ENCODE measurements at regions of chr7 and their contacts with region 1.

Region 1: GRCh38 chr7:139777948-139778841 is at the start of gene HIPK2:
- DNase-seq: peak; percentile 69 to 80 (median 74)
- H3K4me3 ChIP-seq: peak within 1 kb of the TSS; percentile 73 to 92
- H3K4me3 Mint-ChIP-seq: peak within 1 kb of the TSS; percentile 96 to 100 (median 99)
- H3K27ac ChIP-seq: peak within 1 kb of the TSS; percentile 64
- H3K27ac Mint-ChIP-seq: peak within 1 kb of the TSS; percentile 97 to 99 (median 98)
- H3K4me1 ChIP-seq: peaks cover 40% of the 10 kb centered on the region
- H3K4me1 Mint-ChIP-seq: peaks cover 30 to 57% (median 40%) of the 10 kb centered on the region in 4 donors
- H3K27me3 ChIP-seq: no peaks in the 10 kb centered on the region
- H3K27me3 Mint-ChIP-seq: peaks cover 2 to 7% of the 10 kb centered on the region in 2 donors
- total RNA-seq, gene HIPK2: 31.2 to 34.1 TPM

Region 2: GRCh38 chr7:139738101-139738489 is 40.1 kb before region 1 on chr7:
- CTCF ChIA-PET with region 1: no interaction called
- POLR2A ChIA-PET with region 1: interaction called, 3 read pairs
- intact Hi-C with region 1: loop called (anchors 5 kb)
- DNase-seq: no peak
- H3K4me3 ChIP-seq: no peak overlapping the region
- H3K4me3 Mint-ChIP-seq: peak overlapping the region in 6 of 8 donors; percentile 23 to 75 (median 64)
- H3K27ac ChIP-seq: no peak overlapping the region
- H3K27ac Mint-ChIP-seq: peak overlapping the region; percentile 66 to 90 (median 87)
- H3K4me1 ChIP-seq: peaks cover 27% of the 10 kb centered on the region
- H3K4me1 Mint-ChIP-seq: peaks cover 42 to 73% (median 52%) of the 10 kb centered on the region in 4 donors
- H3K27me3 ChIP-seq: no peaks in the 10 kb centered on the region
- H3K27me3 Mint-ChIP-seq: no peaks in the 10 kb centered on the region

Region 3: DNA sequence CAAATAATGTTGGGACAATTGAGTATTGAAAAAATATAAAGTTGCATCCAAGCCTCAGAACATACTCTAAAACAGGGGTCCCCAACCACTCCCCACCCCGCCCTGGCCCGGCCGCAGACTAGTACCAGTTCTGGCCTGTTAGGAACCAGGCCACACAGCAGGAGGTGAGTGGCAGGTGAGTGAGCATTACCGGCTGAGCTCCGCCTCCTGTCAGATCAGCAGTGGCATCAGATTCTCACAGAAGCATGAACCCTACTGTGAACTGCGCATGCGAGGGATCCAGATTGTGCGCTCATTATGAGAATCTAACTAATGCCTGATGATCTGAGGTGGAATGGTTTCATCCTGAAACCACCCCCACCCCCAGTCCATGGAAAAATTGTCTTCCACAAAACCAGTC is 19.8 kb before region 1 on chr7:
- CTCF ChIA-PET with region 1: no interaction called
- POLR2A ChIA-PET with region 1: no interaction called
- intact Hi-C with region 1: no loop called
- DNase-seq: no peak
- H3K4me3 ChIP-seq: no peak overlapping the region
- H3K4me3 Mint-ChIP-seq: no peak overlapping the region
- H3K27ac ChIP-seq: no peak overlapping the region
- H3K27ac Mint-ChIP-seq: no peak overlapping the region
- H3K4me1 ChIP-seq: no peaks in the 10 kb centered on the region
- H3K4me1 Mint-ChIP-seq: peaks cover 39 to 66% (median 57%) of the 10 kb centered on the region in 4 donors
- H3K27me3 ChIP-seq: no peaks in the 10 kb centered on the region
- H3K27me3 Mint-ChIP-seq: no peaks in the 10 kb centered on the region

Region 4: GRCh38 chr7:139829025-139829774 is 51.0 kb after region 1 on chr7 and contains the start of gene TBXAS1:
- CTCF ChIA-PET with region 1: no interaction called
- POLR2A ChIA-PET with region 1: interaction called, 15 read pairs
- intact Hi-C with region 1: loop called (anchors 1 kb)
- DNase-seq: peak in 4 of 5 donors; percentile 18 to 35 (median 28)
- H3K4me3 ChIP-seq: peak within 1 kb of the TSS; percentile 7 to 18
- H3K4me3 Mint-ChIP-seq: peak within 1 kb of the TSS; percentile 83 to 90 (median 87)
- H3K27ac ChIP-seq: peak within 1 kb of the TSS; percentile 36
- H3K27ac Mint-ChIP-seq: peak within 1 kb of the TSS; percentile 84 to 97 (median 93)
- H3K4me1 ChIP-seq: peaks cover 28% of the 10 kb centered on the region
- H3K4me1 Mint-ChIP-seq: peaks cover 24 to 42% (median 31%) of the 10 kb centered on the region in 4 donors
- H3K27me3 ChIP-seq: no peaks in the 10 kb centered on the region
- H3K27me3 Mint-ChIP-seq: peaks cover 2 to 3% of the 10 kb centered on the region in 2 donors
- total RNA-seq, gene TBXAS1: 16.6 to 18.0 TPM

Region 5: GRCh38 chr7:139982927-139983920 is 205.0 kb after region 1 on chr7:
- CTCF ChIA-PET with region 1: no interaction called
- POLR2A ChIA-PET with region 1: no interaction called
- intact Hi-C with region 1: loop called (anchors 5 kb)
- DNase-seq: no peak
- H3K4me3 ChIP-seq: no peak overlapping the region
- H3K4me3 Mint-ChIP-seq: peak overlapping the region in 1 of 8 donors; percentile 58
- H3K27ac ChIP-seq: no peak overlapping the region
- H3K27ac Mint-ChIP-seq: peak overlapping the region in 1 of 7 donors; percentile 32
- H3K4me1 ChIP-seq: peaks cover 20% of the 10 kb centered on the region
- H3K4me1 Mint-ChIP-seq: peaks cover 9 to 21% (median 18%) of the 10 kb centered on the region in 4 donors
- H3K27me3 ChIP-seq: no peaks in the 10 kb centered on the region
- H3K27me3 Mint-ChIP-seq: no peaks in the 10 kb centered on the region

Region 6: GRCh38 chr7:140062528-140063299 is 284.5 kb after region 1 on chr7 and contains the start of gene PARP12:
- CTCF ChIA-PET with region 1: no interaction called
- POLR2A ChIA-PET with region 1: no interaction called
- intact Hi-C with region 1: loop called (anchors 1 kb)
- DNase-seq: peak; percentile 84 to 89 (median 86)
- H3K4me3 ChIP-seq: peak within 1 kb of the TSS; percentile 54 to 89
- H3K4me3 Mint-ChIP-seq: peak within 1 kb of the TSS; percentile 92 to 96 (median 95)
- H3K27ac ChIP-seq: peak within 1 kb of the TSS; percentile 84
- H3K27ac Mint-ChIP-seq: peak within 1 kb of the TSS; percentile 86 to 99 (median 91)
- H3K4me1 ChIP-seq: peaks cover 45% of the 10 kb centered on the region
- H3K4me1 Mint-ChIP-seq: peaks cover 31 to 56% (median 43%) of the 10 kb centered on the region in 4 donors
- H3K27me3 ChIP-seq: no peaks in the 10 kb centered on the region
- H3K27me3 Mint-ChIP-seq: no peaks in the 10 kb centered on the region
- total RNA-seq, gene PARP12: 91.8 to 96.6 TPM

Measured in CD4-positive, alpha-beta memory T cell (primary cell).